ENCODE measurements at regions of chr7 and their contacts with region 1.

Region 1: DNA sequence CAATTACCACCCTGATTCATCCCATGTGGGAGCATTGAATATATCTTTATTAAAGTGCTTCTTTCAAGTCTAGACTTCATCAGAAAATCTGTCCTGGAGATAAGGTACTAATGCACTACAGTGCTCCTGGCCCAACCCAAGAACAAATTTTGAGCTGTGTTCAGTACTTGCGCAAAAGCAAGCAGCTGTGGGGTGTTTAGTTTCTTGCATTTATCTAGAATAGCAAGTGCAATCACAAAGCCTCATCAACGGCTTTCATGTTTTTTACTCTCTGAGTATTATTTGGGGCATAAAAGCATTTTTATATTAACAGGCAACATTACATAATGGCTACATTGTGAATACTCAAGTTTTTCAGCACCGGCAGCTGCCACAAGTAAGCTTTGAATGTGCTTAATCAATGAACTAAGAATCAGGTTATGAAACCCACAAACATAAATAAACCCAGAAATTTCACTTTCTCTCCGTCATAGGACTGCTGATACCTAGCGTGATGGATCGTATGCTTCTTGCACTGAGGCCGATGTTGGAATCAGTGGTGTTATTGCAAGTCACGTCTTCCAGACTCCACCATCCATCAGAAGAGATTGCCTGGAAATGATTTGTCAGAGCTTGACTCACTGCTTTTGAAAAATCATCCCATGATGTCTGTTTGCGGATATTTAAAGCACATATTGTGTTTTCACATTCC is 113.1 kb downstream of the CTTNBP2 start:
- DNase-seq: no peak
- ATAC-seq: no peak
- H3K4me3 ChIP-seq: no peak overlapping the region
- H3K27ac ChIP-seq: no peak overlapping the region
- H3K4me1 ChIP-seq: no peaks in the 10 kb centered on the region
- H3K27me3 ChIP-seq: no peaks in the 10 kb centered on the region
- CTCF ChIP-seq: no peak
- POLR2A ChIP-seq: no peak

Region 2: DNA sequence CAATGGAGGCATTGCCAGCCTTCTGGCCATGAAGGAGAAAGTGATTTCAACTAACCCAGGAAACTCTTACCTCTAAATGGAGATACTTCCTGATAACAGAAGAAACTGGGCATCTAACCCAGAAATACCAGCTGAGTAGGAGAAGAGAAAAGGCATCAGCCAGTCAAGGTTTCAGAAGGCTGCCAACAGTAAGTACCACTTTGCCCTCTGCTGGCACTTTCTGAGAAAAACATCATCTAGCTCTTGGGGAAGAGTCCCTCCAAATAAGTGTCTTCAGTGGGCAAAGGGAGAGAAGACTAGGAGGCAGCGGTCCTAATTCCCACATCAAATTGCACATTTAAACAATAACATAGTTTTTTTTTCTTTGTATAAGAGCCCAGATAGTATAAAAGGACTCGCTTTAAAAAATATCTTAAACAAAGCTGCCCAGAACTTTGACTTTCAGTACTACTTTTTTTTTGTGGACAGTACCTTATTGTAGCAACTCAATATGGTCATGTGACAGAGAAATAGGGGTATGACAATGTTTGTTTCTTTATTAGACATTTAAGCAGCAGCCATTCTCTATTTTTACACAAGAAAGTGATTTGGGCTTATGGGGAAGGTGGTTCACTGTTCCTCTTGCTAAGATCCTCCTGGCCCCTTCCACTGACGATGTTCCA is 44.2 kb before region 1 on chr7:
- intact Hi-C with region 1: no loop called
- DNase-seq: no peak
- ATAC-seq: peak in 1 of 4 donors; percentile 45
- H3K4me3 ChIP-seq: no peak overlapping the region
- H3K27ac ChIP-seq: no peak overlapping the region
- H3K4me1 ChIP-seq: no peaks in the 10 kb centered on the region
- H3K27me3 ChIP-seq: no peaks in the 10 kb centered on the region
- CTCF ChIP-seq: peak in 9 of 12 donors; percentile 18 to 52 (median 35)
- POLR2A ChIP-seq: no peak

Region 3: DNA sequence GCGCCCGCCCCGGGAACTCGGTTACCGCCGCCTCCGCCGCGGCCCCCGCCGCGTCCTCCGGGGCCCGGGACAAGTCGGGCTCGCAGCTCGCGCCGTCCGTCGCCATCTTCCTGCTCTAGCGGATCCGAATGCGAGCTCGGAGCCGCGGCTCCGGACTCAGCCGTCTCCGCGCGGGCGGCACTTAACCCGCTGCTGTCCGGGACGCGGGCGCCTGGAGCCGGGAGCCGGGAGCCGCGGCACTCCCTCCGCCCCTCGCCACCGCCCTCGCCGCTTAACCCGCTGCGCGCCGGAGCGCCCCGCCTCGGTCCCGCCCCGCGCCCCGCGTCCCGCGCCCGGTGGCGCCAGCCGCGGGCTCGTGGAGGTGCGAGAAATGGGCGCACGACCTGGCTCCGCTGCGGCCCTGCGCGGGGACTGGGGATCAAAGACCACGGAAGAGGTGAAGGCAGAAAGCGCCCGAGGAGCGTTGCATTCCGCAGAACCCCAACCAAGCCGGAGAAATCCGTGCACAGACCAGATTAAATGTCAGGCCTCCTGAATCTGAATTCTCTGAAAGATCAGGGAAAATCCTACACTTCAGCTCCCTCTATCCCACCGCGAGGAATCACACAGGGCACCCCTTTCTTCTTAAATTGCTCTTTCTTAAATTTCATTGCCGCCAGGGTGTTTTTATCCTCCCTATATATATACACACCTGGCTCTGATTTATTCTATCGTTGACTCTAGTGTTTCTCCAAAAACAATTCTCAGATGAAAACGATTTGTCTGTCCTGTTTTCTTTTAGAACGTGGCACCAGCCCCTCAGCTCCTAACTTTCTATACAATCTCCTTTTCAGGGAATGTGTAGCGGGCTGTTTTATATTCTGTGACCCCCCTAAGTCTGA is 113.5 kb after region 1 on chr7 and contains the start of gene CTTNBP2:
- intact Hi-C with region 1: loop called in 5 of 10 experiments (anchors 5 to 10 kb)
- DNase-seq: peak; percentile 45 to 77 (median 56)
- ATAC-seq: peak; percentile 35 to 89 (median 70)
- H3K4me3 ChIP-seq: peak within 1 kb of the TSS; percentile 60 to 95 (median 80)
- H3K27ac ChIP-seq: peak within 1 kb of the TSS in 7 of 12 donors; percentile 8 to 70 (median 61)
- H3K4me1 ChIP-seq: peaks cover 0 to 20% (median 0%) of the 10 kb centered on the region in 12 donors
- H3K27me3 ChIP-seq: peaks cover 0 to 51% (median 0%) of the 10 kb centered on the region in 9 donors
- CTCF ChIP-seq: peak in 3 of 12 donors; percentile 21 to 30 (median 22)
- POLR2A ChIP-seq: no peak
- total RNA-seq, gene CTTNBP2: 0.31 to 3.9 (median 0.95) TPM

Region 4: DNA sequence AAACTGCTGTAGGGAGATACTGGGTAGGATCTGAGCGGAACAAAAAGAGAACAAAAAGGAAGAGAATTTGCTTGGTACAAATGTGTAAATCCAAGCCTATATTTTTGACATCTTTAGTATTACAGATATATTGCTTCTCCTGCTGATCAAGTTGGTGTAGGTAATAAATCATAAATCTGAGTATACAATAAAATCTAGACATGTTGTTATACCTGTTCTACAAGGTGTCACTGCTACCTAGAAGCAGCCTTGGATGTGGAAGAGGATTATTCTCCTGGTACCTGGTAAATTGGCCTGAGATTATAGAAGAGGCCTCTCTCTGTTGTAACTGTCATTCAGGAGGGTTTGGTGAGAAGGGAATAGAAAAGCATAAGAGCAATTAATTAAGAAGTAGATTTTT is 333.9 kb after region 1 on chr7:
- intact Hi-C with region 1: loop called in 1 of 10 experiments (anchors 10 kb)
- DNase-seq: no peak
- ATAC-seq: no peak
- H3K4me3 ChIP-seq: no peak overlapping the region
- H3K27ac ChIP-seq: no peak overlapping the region
- H3K4me1 ChIP-seq: no peaks in the 10 kb centered on the region
- H3K27me3 ChIP-seq: no peaks in the 10 kb centered on the region
- CTCF ChIP-seq: no peak
- POLR2A ChIP-seq: no peak

Region 5: GRCh38 chr7:118104812-118105441 is 344.8 kb after region 1 on chr7:
- intact Hi-C with region 1: loop called in 4 of 10 experiments (anchors 5 to 10 kb)
- DNase-seq: no peak
- ATAC-seq: no peak
- H3K4me3 ChIP-seq: no peak overlapping the region
- H3K27ac ChIP-seq: no peak overlapping the region
- H3K4me1 ChIP-seq: no peaks in the 10 kb centered on the region
- H3K27me3 ChIP-seq: no peaks in the 10 kb centered on the region
- CTCF ChIP-seq: peak; percentile 19 to 62 (median 42)
- POLR2A ChIP-seq: no peak